ENCODE measurements at regions of chr4 and their contacts with region 1.

Region 1: GRCh38 chr4:155953151-155954114 is at the start of gene CTSO:
- DNase-seq: peak; percentile 22
- ATAC-seq: peak; percentile 98
- H3K4me3 ChIP-seq: peak within 1 kb of the TSS; percentile 55 to 78 (median 56)
- H3K27ac ChIP-seq: no peak within 1 kb of the TSS
- H3K4me1 ChIP-seq: peaks cover 25% of the 10 kb centered on the region
- H3K27me3 ChIP-seq: no peaks in the 10 kb centered on the region
- CTCF ChIP-seq: peak; percentile 52
- EP300 ChIP-seq: no peak
- POLR2A ChIP-seq: peak in 1 of 2 experiments; percentile 31; a peak in 1 of 4 replicates
- RAD21 ChIP-seq: no peak
- total RNA-seq, gene CTSO: 0.07 TPM in 1 of 2 replicates, not detected in the other

Region 2: DNA sequence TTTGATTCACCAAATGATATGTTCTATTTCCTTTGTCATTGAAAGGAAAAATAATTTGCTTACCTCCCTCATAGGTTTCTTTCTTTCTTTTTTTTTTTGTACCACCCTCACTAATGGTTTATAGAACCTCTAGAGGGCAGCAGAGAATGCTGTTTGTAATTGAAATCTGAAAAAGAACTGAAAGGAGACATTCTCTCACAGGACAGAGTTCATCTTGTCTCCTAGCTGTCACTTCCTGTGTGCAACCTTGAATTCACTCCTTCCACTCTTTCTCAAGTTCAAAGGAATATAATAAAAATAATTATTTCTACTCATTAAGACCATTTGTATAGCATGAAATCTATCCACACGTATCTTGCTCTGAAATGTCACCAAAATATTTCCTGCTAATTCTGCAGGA is 143.6 kb before region 1 on chr4:
- CTCF ChIA-PET with region 1: no interaction called
- POLR2A ChIA-PET with region 1: no interaction called
- in situ Hi-C with region 1: no loop called
- intact Hi-C with region 1: loop called (anchors 1 kb)
- DNase-seq: peak; percentile 64
- ATAC-seq: peak; percentile 70
- H3K4me3 ChIP-seq: no peak overlapping the region
- H3K27ac ChIP-seq: no peak overlapping the region
- H3K4me1 ChIP-seq: no peaks in the 10 kb centered on the region
- H3K27me3 ChIP-seq: no peaks in the 10 kb centered on the region; a peak in 1 of 5 replicates
- CTCF ChIP-seq: peak; percentile 41
- EP300 ChIP-seq: no peak
- POLR2A ChIP-seq: no peak
- RAD21 ChIP-seq: no peak

Region 3: DNA sequence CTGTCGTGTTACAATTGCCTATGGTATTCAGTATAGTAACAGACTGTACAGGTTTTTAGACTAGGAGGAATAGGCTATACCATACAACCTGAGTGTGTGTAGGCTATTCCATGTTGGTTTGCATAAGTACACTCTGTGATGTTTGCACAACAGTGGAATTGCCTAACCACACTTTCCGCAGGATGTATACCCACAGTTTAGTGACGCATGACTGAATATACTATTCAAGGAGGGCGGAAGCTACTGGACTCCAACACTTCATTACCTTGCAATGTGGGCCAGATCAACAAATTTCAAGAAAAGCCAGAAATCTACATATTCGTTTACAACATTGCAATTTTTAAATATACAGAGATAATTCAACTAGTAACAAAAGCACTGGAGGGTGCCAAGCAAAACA is 701.0 kb after region 1 on chr4:
- CTCF ChIA-PET with region 1: no interaction called
- POLR2A ChIA-PET with region 1: no interaction called
- in situ Hi-C with region 1: no loop called
- intact Hi-C with region 1: no loop called
- DNase-seq: peak; percentile 66
- ATAC-seq: peak; percentile 86
- H3K4me3 ChIP-seq: no peak overlapping the region
- H3K27ac ChIP-seq: no peak overlapping the region
- H3K4me1 ChIP-seq: peaks cover 8% of the 10 kb centered on the region; the same call in 1 of the 2 replicates
- H3K27me3 ChIP-seq: no peaks in the 10 kb centered on the region
- CTCF ChIP-seq: no peak
- EP300 ChIP-seq: no peak
- POLR2A ChIP-seq: no peak
- RAD21 ChIP-seq: no peak

Measured in HepG2 (cell line).